ENCODE measurements at regions of chr9 and their contacts with region 1.

Region 1: DNA sequence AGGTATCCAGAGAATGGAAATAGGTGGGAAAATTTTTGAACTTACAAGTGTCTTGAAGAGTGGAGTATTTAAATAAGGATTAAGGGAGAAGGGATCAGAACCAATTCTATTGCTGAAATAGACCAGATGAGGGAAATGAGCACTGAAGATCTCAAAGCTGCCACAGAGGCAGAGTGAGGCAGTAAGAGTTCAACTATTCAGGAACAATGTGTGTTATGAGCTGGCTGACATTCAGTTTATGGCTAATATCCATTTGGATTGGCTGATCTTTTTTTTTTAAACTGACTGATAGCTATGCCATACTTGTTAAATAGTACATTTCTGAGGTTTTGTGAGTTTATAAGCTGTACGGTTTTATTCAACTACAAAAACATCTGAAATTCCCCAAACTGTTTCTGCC is 95.3 kb upstream of the GNA14 start:
- DNase-seq: peak; percentile 37
- H3K4me3 ChIP-seq: no peak overlapping the region
- H3K27ac ChIP-seq: no peak overlapping the region
- H3K27me3 ChIP-seq: no peaks in the 10 kb centered on the region
- CTCF ChIP-seq: no peak

Region 2: DNA sequence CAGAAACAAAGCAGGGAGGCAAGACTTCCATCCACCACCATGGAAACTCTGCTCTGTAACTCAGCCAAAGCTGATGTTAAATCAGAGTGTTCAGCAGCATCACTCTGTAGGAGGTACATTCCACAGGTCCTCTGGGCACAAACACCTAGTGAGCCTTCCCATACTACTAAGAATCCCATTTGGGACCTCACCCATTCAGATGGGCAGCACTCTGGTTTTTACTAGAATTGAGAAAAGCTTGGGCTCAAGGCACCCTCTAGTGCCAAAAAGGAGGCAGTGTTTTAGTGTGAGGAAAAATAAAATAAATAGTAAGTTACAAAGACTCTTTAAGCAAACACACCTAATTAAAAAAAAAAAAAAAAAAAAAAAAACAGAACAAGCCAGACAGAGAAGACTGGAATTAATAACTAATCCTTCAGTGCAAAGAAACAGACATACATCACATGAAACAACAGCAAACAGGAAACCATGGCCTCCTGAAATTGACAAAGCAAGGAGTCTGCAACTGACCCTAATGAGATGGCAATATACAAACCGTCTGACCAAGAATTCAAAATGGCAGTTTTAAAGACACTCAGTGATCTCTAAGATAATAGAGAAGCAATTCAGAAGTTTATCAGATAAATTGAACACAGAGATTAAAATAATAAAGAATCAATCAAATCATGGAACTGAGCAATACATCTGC is 254.8 kb before region 1 on chr9:
- CTCF ChIA-PET with region 1: no interaction called
- POLR2A ChIA-PET with region 1: no interaction called
- DNase-seq: no peak
- H3K4me3 ChIP-seq: no peak overlapping the region
- H3K27ac ChIP-seq: no peak overlapping the region
- H3K27me3 ChIP-seq: no peaks in the 10 kb centered on the region
- CTCF ChIP-seq: peak; percentile 63

Region 3: DNA sequence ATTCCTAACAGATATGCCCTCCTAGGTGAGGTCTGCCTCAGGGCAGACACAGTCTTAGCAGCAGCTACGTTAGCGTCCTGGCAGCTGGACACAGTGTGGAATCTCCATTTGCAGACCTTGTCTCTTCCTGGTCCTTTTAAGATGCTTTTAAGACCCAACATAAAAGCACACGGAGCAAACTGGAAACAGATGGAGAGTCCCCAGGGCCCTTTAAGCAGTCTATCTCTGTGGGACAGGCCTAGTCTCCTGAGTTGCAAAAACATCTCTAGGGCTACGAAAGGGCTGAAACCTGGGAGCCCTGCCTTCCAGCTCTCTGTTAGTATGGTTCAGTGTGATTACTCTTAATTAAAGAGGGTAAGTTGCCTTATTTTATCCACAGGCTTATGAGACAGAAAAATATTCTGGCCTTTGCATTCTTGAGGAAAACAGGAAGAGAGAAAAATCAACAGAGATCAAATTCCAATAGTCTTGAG is 29.3 kb before region 1 on chr9:
- CTCF ChIA-PET with region 1: no interaction called
- POLR2A ChIA-PET with region 1: interaction called, 14 read pairs
- DNase-seq: no peak
- H3K4me3 ChIP-seq: no peak overlapping the region
- H3K27ac ChIP-seq: peak overlapping the region; percentile 63
- H3K27me3 ChIP-seq: no peaks in the 10 kb centered on the region
- CTCF ChIP-seq: no peak